Activated CD4-positive, alpha-beta memory T cell treated with anti-CD3 and anti-CD28 coated beads, Interleukin-2, amount 10 ng/mL, durations not matched to agents 7 days and 5 days (primary cell): ENCODE measurements at regions of chr6 and their contacts with region 1.

Region 1: GRCh38 chr6:31769684-31770371 is 7.3 kb downstream of the VWA7 start:
- DNase-seq: peak; percentile 86
- H3K4me3 Mint-ChIP-seq: no peak overlapping the region
- H3K27ac Mint-ChIP-seq: peak overlapping the region; percentile 57
- H3K4me1 Mint-ChIP-seq: peaks cover 37% of the 10 kb centered on the region
- H3K27me3 Mint-ChIP-seq: no peaks in the 10 kb centered on the region

Region 2: DNA sequence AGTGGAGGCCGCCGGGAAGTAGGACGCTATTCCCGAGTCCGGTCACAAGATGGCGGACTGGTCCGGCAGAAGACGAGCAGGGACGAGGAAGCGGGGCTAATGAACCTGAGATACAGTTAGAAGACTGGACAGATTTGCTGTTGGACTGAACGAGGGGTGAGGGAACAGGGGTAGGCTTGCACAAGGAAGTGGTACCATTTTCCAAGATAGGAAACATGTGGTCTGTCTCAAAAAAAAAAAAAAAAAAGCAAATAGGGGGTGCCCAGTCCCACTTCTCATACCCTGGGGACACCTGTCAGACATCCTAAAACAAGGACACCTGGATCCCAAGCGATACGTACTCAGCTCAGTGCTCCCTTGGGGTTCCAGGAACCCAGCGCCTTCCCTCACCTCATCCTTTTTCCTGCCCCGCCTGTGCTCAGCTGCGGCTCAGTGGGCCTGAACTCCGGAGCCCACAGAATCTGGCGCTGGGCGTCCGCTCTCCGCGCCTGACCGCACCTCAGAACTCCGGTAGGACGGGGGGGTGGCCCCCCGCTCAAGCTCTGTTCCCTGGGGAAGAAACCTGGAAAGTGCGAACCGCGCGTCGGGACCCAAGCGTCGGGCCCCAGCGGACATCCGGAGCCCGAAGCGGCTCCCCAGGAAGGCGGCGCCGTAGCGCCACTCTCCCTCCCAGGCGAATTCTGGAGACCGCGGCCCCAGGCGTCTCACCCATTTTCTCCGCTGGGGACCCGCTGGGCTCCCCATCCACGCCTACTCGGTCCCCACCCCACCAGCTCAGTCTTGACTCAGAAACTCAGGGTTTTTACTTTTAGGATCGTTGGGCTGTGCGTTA is 88.8 kb before region 1 on chr6 and contains the start of gene LY6G5C:
- CTCF ChIA-PET with region 1: interaction called, 11 read pairs
- POLR2A ChIA-PET with region 1: no interaction called
- DNase-seq: peak; percentile 77
- H3K4me3 Mint-ChIP-seq: peak within 1 kb of the TSS; percentile 74
- H3K27ac Mint-ChIP-seq: peak within 1 kb of the TSS; percentile 46
- H3K4me1 Mint-ChIP-seq: peaks cover 38% of the 10 kb centered on the region
- H3K27me3 Mint-ChIP-seq: no peaks in the 10 kb centered on the region
- total RNA-seq, gene LY6G5C: 2.3 to 2.6 TPM

Region 3: DNA sequence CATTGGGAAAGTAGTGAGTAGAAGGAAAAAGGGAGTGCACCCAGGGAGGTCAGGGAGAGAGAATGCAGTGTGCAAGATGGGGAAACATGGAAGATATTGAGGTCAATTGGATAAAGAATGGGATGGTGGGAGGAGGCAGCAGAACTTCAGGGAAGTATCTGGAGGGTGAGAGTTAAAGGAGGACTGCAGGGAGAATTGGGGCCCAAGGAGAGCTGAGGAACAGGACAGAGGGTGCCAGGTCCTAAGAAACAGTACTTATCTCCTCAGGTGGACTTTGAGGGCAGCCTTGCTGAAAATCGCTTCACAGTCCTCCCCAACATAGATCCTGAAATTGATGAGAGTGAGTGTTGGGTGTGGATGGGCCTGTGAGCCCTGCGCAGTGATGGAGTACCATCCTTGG is 11.5 kb before region 1 on chr6:
- CTCF ChIA-PET with region 1: interaction called, 12 read pairs
- POLR2A ChIA-PET with region 1: interaction called, 5 read pairs
- DNase-seq: no peak
- H3K4me3 Mint-ChIP-seq: no peak overlapping the region
- H3K27ac Mint-ChIP-seq: no peak overlapping the region
- H3K4me1 Mint-ChIP-seq: peaks cover under 1% of the 10 kb centered on the region
- H3K27me3 Mint-ChIP-seq: no peaks in the 10 kb centered on the region

Region 4: GRCh38 chr6:31806465-31807272 is 36.8 kb after region 1 on chr6 and contains the start of gene LSM2:
- CTCF ChIA-PET with region 1: interaction called, 16 read pairs
- POLR2A ChIA-PET with region 1: interaction called, 4 read pairs
- DNase-seq: peak; percentile 98
- H3K4me3 Mint-ChIP-seq: peak within 1 kb of the TSS; percentile 91
- H3K27ac Mint-ChIP-seq: peak within 1 kb of the TSS; percentile 91
- H3K4me1 Mint-ChIP-seq: peaks cover 43% of the 10 kb centered on the region
- H3K27me3 Mint-ChIP-seq: no peaks in the 10 kb centered on the region
- total RNA-seq, gene LSM2: 100 to 108 TPM

Region 5: DNA sequence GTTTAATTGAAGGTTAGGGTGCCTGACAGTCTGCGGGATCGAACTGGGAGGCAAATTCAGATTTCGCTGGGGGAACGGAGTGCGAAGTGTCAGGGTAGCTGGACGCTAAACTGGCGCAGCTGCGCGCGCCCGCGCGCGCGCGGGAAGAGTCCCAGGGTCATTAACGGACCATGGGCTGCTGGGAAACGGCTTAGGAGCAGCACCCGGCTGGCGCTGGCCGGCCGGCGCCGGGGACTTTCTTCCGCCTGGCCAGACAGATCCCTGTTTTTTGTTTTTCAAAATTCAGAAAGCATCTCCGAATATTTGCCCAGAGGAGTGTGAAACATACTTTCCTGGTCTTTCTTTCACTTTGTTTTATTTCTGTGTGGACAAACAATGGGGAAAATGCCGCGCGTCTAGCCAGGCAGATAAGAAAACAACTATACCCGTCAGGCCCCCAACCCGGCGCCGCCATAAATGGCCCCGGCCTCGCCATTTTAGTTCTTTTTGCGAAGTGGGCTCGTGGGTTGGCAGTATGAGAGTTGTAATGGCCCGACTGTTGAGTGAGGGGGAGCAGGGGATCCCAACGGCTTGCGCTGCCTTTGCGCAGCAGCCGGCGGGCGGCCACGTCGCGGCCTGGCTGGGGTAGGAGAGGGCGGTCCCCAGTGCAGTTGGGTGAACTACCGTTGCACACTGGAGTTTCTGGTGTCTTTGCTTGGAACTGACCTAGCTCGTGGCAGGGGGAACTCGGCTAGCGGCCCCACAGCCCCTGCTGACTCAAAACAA is 64.8 kb after region 1 on chr6:
- CTCF ChIA-PET with region 1: interaction called, 12 read pairs
- POLR2A ChIA-PET with region 1: no interaction called
- DNase-seq: peak; percentile 79
- H3K4me3 Mint-ChIP-seq: peak overlapping the region; percentile 81
- H3K27ac Mint-ChIP-seq: peak overlapping the region; percentile 91
- H3K4me1 Mint-ChIP-seq: peaks cover 56% of the 10 kb centered on the region
- H3K27me3 Mint-ChIP-seq: no peaks in the 10 kb centered on the region